Activated CD8-positive, alpha-beta T cell treated with anti-CD3 and anti-CD28 coated beads, Interleukin-2, amount 10 ng/mL, durations not matched to agents 7 days and 5 days (primary cell): ENCODE measurements at regions of chr7 and their contacts with region 1.

Region 1: GRCh38 chr7:106736508-106737201 is 75.7 kb upstream of the CCDC71L start:
- DNase-seq: peak; percentile 64
- ATAC-seq: peak; percentile 93
- H3K4me3 Mint-ChIP-seq: no peak overlapping the region
- H3K27ac Mint-ChIP-seq: no peak overlapping the region
- H3K4me1 Mint-ChIP-seq: peaks cover 28% of the 10 kb centered on the region
- H3K27me3 Mint-ChIP-seq: no peaks in the 10 kb centered on the region

Region 2: DNA sequence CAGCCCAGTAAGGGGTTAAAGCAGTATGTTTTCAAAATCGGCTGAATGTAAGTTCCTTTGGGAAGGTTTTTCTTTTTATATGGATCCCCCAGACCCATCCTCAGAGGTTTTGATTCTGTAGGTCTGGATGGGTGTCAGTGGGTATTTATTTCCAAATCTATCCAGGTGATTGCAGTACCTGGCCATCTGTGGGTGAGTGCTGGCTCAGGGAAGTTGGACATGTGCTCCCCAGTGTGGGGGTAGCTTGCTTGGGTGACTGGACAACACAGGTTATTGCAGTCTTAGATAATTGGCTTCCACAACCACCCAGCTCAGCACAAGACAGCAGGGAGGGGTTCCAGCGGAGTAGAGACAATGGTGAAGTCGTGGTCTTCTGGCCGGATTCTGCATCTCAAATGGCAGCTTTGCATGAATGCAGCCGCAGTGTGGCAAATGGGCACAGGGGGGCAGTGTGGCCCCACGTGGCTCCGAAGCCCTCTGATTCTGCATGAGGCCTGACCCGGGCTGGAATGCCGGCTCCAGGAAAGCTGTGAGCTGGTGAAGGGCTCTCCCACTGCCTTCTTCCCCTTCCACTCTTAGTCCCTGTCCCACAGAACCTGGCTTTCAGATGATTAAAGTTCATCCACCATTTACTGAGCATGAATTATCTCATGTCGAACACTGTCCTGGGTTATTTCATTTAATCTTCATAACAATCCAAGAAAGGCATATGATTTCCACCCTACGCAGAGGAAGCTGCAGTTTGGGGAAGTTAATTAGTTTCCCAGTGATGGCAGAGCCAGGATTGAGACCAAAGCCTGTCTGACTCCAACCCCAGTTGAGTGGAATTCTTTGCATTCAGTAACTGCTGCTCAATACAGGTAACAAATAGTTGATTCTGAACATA is 560.0 kb before region 1 on chr7:
- CTCF ChIA-PET with region 1: interaction called, 28 read pairs
- POLR2A ChIA-PET with region 1: no interaction called
- DNase-seq: peak; percentile 75
- ATAC-seq: peak; percentile 81
- H3K4me3 Mint-ChIP-seq: no peak overlapping the region
- H3K27ac Mint-ChIP-seq: no peak overlapping the region
- H3K4me1 Mint-ChIP-seq: peaks cover 4% of the 10 kb centered on the region
- H3K27me3 Mint-ChIP-seq: peaks cover 22% of the 10 kb centered on the region

Region 3: GRCh38 chr7:106542550-106543220 is 194.0 kb before region 1 on chr7:
- CTCF ChIA-PET with region 1: interaction called, 39 read pairs
- POLR2A ChIA-PET with region 1: no interaction called
- DNase-seq: peak; percentile 48
- ATAC-seq: peak; percentile 58
- H3K4me3 Mint-ChIP-seq: no peak overlapping the region
- H3K27ac Mint-ChIP-seq: no peak overlapping the region
- H3K4me1 Mint-ChIP-seq: peaks cover 8% of the 10 kb centered on the region
- H3K27me3 Mint-ChIP-seq: no peaks in the 10 kb centered on the region

Region 4: DNA sequence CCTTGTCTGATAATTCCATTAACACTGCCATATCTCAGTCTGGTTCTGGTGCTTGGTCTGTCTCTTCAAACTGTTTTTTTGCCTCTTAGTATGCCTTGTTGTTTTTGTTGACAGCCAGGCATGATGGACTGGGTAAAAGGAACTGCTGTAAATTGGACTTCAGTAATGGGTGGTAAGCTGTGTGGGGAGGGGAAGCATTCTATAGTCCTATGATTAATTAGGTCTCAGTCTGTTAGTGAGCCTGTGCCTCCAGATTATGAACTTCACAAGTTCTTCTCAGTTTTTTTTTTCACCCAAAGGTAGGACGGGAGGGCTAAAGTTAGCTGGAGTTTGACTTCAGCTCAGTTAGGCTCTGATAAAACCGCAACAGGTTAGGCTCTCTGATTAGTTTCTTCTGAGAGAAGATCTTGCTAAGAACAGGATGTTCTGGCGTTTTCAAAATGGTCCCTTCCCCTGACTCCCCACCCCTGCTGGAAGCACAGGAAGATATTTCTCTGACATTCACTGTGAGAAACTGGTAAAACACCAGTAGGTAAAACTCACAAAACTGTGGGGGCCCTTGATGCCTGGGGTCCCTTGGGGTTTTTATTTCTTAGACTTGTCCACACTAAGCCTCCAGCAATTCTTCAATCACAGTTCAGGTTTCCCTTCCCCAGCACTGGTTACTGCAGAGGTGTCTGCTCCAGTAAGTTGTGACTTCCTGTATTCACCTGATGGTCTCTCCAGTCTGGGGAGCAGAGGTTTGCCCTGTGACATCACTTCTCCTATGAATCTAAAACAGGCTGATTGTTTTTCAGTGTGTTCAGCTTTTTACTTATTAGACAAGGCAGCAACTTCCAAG is 32.4 kb before region 1 on chr7:
- CTCF ChIA-PET with region 1: interaction called, 12 read pairs
- POLR2A ChIA-PET with region 1: no interaction called
- DNase-seq: no peak
- ATAC-seq: peak; percentile 79
- H3K4me3 Mint-ChIP-seq: no peak overlapping the region
- H3K27ac Mint-ChIP-seq: no peak overlapping the region
- H3K4me1 Mint-ChIP-seq: peaks cover 8% of the 10 kb centered on the region
- H3K27me3 Mint-ChIP-seq: peaks cover 2% of the 10 kb centered on the region

Region 5: GRCh38 chr7:106717955-106718871 is 18.4 kb before region 1 on chr7:
- CTCF ChIA-PET with region 1: interaction called, 36 read pairs
- POLR2A ChIA-PET with region 1: no interaction called
- DNase-seq: peak; percentile 73
- ATAC-seq: peak; percentile 97
- H3K4me3 Mint-ChIP-seq: no peak overlapping the region
- H3K27ac Mint-ChIP-seq: no peak overlapping the region
- H3K4me1 Mint-ChIP-seq: peaks cover 2% of the 10 kb centered on the region
- H3K27me3 Mint-ChIP-seq: no peaks in the 10 kb centered on the region

Region 6: GRCh38 chr7:106915873-106916272 is 179.2 kb after region 1 on chr7:
- CTCF ChIA-PET with region 1: no interaction called
- POLR2A ChIA-PET with region 1: no interaction called
- DNase-seq: no peak
- ATAC-seq: no peak
- H3K4me3 Mint-ChIP-seq: no peak overlapping the region
- H3K27ac Mint-ChIP-seq: no peak overlapping the region
- H3K4me1 Mint-ChIP-seq: no peaks in the 10 kb centered on the region
- H3K27me3 Mint-ChIP-seq: peaks cover 4% of the 10 kb centered on the region